Activated T-helper 2 cell treated with anti-CD3 and anti-CD28 coated beads, Interferon-gamma antibody, Interleukin-2, Interleukin-4, amounts not matched to agents 10 μg/mL and 5 μg/mL and 100 μg/mL, durations not matched to agents 14 hours and 24 hours and 36 hours (primary cell): ENCODE measurements at regions of chr16 and their contacts with region 1.

Region 1: GRCh38 chr16:11076259-11077018 is 132.1 kb downstream of the CLEC16A start:
- DNase-seq: peak; percentile 70
- H3K4me3 Mint-ChIP-seq: peak overlapping the region; percentile 31
- H3K27ac Mint-ChIP-seq: peak overlapping the region; percentile 94
- H3K4me1 Mint-ChIP-seq: peaks cover 95% of the 10 kb centered on the region
- H3K27me3 Mint-ChIP-seq: no peaks in the 10 kb centered on the region

Region 2: DNA sequence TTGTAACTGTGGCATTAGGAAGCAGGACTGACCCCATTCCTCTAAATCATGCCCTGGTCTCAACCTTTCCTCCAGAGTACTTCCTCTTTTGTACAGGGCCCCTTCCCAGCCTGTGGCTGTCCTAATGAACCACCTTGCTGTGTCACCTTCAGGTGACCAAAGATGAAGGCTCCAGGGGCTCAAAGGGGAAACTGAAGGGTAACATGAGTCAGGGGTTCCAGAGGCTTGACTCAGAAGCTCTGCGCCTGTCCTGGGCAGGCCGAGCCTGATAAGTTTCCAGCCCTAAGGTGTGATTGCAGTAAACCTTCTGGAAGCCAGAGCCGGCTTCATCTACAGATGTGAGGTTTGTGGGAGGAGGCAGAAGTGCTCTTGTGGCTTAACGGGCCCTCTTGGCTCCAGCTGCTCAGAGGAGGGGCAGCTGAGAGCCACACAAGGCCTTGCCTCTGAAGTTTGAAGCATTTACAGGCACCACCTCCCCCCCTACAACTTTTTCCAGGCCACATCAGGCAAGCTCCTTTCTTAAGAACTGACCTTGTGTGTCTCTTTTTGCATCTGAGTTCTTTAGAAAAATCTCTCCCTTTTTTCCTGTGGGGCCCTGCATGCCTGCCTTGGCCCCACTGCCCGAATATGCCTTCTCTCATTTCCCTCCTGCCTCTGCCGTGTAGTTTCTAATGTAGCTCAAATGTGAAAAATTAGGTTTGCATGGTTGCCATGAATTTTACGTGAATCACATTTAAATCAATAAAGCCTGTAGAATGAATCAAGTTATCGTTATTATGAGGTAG is 17.8 kb after region 1 on chr16:
- intact Hi-C with region 1: loop called (anchors 1 kb)
- DNase-seq: peak; percentile 67
- H3K4me3 Mint-ChIP-seq: peak overlapping the region; percentile 50
- H3K27ac Mint-ChIP-seq: peak overlapping the region; percentile 98
- H3K4me1 Mint-ChIP-seq: peaks cover 75% of the 10 kb centered on the region
- H3K27me3 Mint-ChIP-seq: no peaks in the 10 kb centered on the region